PC-3 (cell line): ENCODE measurements at regions of chr11 and their contacts with region 1.

Region 1: DNA sequence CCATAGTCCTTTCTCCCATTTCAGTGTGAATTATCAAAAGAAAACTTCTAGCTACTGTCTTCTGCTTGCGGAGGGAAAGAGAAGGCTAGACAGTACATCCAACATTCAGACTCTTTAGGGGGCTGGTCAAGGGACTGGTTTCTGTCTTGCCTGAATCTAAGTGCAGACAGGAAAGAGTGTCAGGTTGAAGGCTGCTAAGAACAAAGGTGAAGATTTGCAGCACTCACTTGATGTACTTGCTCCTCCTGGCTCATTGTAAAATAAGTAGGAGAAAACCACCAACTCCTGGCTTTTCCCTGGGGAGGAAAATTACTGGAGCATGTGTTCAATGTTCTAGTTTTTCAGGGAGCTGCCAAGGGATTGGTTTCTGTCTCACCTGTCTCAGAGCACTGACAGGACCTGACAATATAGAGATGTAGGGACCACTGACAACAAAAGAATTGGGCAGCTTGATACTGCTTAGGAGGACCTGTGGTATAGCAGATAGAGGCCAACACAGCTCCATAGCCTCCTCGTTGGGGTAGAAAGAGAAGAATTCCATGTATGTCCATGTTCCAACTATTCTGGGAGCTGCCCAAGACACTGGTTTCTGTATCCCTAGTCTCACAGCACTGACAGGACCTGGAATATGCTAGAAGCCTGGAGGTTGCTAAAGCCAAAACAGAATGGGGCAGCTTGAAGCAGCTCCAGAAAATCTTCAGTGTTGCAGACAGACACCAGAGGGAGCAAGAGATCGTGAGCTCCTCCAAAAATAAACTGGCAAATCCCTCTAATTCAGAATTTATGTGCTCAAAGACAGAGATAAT is 39.7 kb upstream of the MMP12 start:
- DNase-seq: peak; percentile 76
- ATAC-seq: peak; percentile 86
- H3K4me3 ChIP-seq: no peak overlapping the region
- H3K27ac ChIP-seq: no peak overlapping the region
- H3K4me1 ChIP-seq: peaks cover 15% of the 10 kb centered on the region
- H3K27me3 ChIP-seq: no peaks in the 10 kb centered on the region
- CTCF ChIP-seq: peak; percentile 93

Region 2: GRCh38 chr11:102810945-102811660 is 103.3 kb before region 1 on chr11:
- CTCF ChIA-PET with region 1: no interaction called
- POLR2A ChIA-PET with region 1: no interaction called
- intact Hi-C with region 1: loop called (anchors 1 kb)
- DNase-seq: peak; percentile 69
- ATAC-seq: peak; percentile 86
- H3K4me3 ChIP-seq: no peak overlapping the region
- H3K27ac ChIP-seq: no peak overlapping the region
- H3K4me1 ChIP-seq: 0 out of 2 replicates have a peak, but pooled peaks cover 5% of the 10 kb centered on the region
- H3K27me3 ChIP-seq: no peaks in the 10 kb centered on the region
- CTCF ChIP-seq: peak; percentile 88

Region 3: DNA sequence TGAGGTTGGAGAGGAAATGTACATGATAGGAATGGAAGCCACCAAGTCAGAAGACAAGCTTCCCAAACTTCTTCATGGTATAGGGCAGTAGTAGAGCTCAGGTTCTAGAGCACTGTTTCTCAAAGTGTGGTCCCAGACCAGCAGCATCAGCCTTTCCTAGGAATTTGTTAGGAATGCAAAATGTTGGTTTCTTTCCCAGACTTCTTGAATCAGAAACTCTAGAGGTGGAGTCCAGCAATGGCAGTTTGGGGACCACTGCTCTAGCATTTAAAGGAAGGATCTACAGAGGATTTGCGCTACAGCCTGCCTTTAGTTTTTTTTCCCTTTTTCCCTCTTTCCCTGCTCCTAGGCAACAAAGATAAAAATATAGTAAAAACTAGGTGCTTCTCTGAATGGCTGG is 22.7 kb before region 1 on chr11:
- CTCF ChIA-PET with region 1: no interaction called
- POLR2A ChIA-PET with region 1: interaction called, 18 read pairs
- intact Hi-C with region 1: no loop called
- DNase-seq: no peak
- ATAC-seq: no peak
- H3K4me3 ChIP-seq: no peak overlapping the region
- H3K27ac ChIP-seq: no peak overlapping the region
- H3K4me1 ChIP-seq: 0 out of 2 replicates have a peak, but pooled peaks cover 3% of the 10 kb centered on the region
- H3K27me3 ChIP-seq: no peaks in the 10 kb centered on the region
- CTCF ChIP-seq: no peak